Common myeloid progenitor, CD34-positive (primary cell): ENCODE measurements at regions of chr6 and their contacts with region 1.

Region 1: DNA sequence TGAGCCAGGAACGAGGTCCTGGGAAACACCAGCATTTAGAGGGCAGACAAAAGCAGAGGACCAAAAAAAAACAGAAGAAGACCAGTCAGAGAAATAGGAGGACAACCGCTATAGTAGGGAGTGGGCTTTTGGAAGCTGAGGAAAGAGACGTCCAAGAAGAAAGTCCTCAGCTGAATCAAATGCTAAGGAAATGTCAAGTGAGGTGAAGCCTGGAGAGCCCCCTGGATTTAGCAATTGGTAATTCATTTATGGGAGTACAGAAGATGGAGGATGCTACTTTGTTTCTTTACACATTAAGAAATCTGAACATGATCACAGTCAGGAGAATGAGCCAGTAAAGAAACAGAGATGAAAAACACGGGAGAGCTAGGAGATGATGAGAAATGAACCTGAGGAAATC is 41.1 kb downstream of the LRP11 start:
- DNase-seq: peak in 2 of 3 donors; percentile 13 to 20
- H3K4me3 ChIP-seq: no peak overlapping the region
- H3K27ac ChIP-seq: no peak overlapping the region
- H3K4me1 ChIP-seq: no peaks in the 10 kb centered on the region
- H3K27me3 ChIP-seq: no peaks in the 10 kb centered on the region

Region 2: DNA sequence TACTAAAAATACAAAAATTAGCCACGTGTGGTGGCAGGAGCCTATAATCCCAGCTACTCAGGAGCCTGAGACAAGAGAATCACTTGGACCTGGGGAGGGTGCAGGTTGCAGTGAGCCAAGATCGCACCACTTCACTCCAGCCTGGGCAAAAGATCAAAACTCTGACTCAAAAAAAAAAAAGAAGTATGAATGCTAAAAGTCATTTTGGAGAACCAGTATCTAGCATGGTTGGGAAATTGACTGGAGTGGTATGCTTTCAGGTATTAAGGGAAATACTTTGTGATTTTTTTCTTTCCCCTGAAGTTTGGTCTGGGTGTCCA is 43.4 kb before region 1 on chr6:
- CTCF ChIA-PET with region 1: no interaction called
- POLR2A ChIA-PET with region 1: no interaction called
- DNase-seq: no peak
- H3K4me3 ChIP-seq: no peak overlapping the region
- H3K27ac ChIP-seq: no peak overlapping the region
- H3K4me1 ChIP-seq: no peaks in the 10 kb centered on the region
- H3K27me3 ChIP-seq: no peaks in the 10 kb centered on the region

Region 3: GRCh38 chr6:149806127-149806526 is 16.9 kb before region 1 on chr6:
- CTCF ChIA-PET with region 1: interaction called, 14 read pairs
- POLR2A ChIA-PET with region 1: no interaction called
- DNase-seq: peak in 2 of 3 donors; percentile 9 to 20
- H3K4me3 ChIP-seq: no peak overlapping the region
- H3K27ac ChIP-seq: no peak overlapping the region
- H3K4me1 ChIP-seq: peaks cover 0 to 17% (median 4%) of the 10 kb centered on the region in 4 experiments
- H3K27me3 ChIP-seq: no peaks in the 10 kb centered on the region